Endothelial cell of umbilical vein (primary cell): ENCODE measurements at regions of chr14 and their contacts with region 1.

Region 1: DNA sequence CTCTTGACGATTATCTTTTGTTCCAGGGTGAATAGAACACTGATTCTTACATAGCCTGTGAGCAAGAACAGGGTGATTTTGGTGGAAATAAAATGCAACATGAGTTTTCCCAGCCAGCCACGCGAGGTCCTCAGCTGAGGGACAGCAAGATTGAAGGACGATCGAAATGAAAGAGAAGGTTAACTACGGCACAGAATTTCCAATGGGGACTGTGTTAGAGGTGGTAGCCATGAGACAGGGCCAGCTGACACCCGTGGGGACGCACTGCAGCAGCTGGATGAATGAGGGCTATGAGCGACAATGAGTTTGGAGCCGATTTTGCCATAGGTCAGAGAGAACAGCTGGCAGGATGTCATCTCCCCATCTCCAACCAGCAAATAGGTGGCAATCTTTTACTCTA is 243.4 kb upstream of the PELI2 start:
- DNase-seq: no peak
- H3K4me3 ChIP-seq: no peak overlapping the region
- H3K27ac ChIP-seq: no peak overlapping the region
- H3K4me1 ChIP-seq: no peaks in the 10 kb centered on the region
- H3K27me3 ChIP-seq: peaks cover 12 to 13% of the 10 kb centered on the region in 2 experiments
- CTCF ChIP-seq: no peak
- POLR2A ChIP-seq: no peak

Region 2: GRCh38 chr14:56082880-56083279 is 208.1 kb after region 1 on chr14:
- CTCF ChIA-PET with region 1: no interaction called
- POLR2A ChIA-PET with region 1: interaction called, 12 read pairs
- dilution Hi-C with region 1: no loop called
- intact Hi-C with region 1: no loop called
- DNase-seq: no peak
- H3K4me3 ChIP-seq: no peak overlapping the region
- H3K27ac ChIP-seq: no peak overlapping the region
- H3K4me1 ChIP-seq: no peaks in the 10 kb centered on the region
- H3K27me3 ChIP-seq: peaks cover 7 to 12% of the 10 kb centered on the region in 2 experiments
- CTCF ChIP-seq: no peak
- POLR2A ChIP-seq: no peak